Activated T-helper 2 cell treated with anti-CD3 and anti-CD28 coated beads, Interferon-gamma antibody, Interleukin-2, Interleukin-4, amounts not matched to agents 10 μg/mL and 5 μg/mL and 100 μg/mL, durations not matched to agents 14 hours and 24 hours and 36 hours (primary cell): ENCODE measurements at regions of chr9 and their contacts with region 1.

Region 1: DNA sequence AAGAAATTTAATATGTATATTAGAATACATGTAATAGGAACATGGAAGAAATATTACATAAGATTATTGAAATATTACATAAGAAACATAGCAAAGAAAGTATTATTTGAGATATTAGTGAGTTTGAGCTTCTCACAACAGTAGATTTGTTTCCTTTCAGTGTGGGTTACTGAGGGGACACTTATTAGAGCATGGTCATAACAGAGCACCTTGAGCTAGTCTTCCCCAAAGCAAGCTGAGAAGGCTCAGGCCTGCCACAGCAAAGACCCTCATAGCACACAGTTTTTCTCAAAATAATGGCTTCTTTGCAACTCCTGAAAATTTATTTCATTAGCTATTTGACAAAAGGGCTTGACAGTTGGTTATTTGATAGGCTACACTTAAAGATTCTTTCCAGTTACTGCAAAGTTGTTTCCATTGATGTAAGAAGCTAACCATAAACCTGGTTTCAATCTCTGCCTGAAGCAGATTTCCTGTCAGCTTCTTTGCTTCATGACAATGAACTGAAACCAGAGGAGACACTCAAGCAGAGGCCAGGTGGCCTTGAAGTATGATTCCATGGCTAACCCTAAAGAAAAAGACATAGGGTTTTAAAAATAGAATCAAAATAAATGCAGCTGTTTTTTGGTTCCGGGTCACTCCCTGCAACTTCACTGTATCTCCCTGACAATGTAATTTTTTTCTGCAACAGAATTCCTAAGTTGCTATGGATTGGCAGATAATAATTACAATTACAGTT is 68.6 kb downstream of the ERMP1 start:
- DNase-seq: no peak
- H3K4me3 Mint-ChIP-seq: no peak overlapping the region
- H3K27ac Mint-ChIP-seq: peak overlapping the region; percentile 61
- H3K4me1 Mint-ChIP-seq: peaks cover 43% of the 10 kb centered on the region
- H3K27me3 Mint-ChIP-seq: no peaks in the 10 kb centered on the region

Region 2: GRCh38 chr9:5450359-5451091 is 313.8 kb before region 1 on chr9 and contains the start of gene CD274:
- intact Hi-C with region 1: loop called (anchors 10 kb)
- DNase-seq: peak; percentile 77
- H3K4me3 Mint-ChIP-seq: peak within 1 kb of the TSS; percentile 97
- H3K27ac Mint-ChIP-seq: peak within 1 kb of the TSS; percentile 92
- H3K4me1 Mint-ChIP-seq: peaks cover 71% of the 10 kb centered on the region
- H3K27me3 Mint-ChIP-seq: no peaks in the 10 kb centered on the region
- total RNA-seq, gene CD274: 36.7 and 40.5 TPM in 2 replicates

Region 3: DNA sequence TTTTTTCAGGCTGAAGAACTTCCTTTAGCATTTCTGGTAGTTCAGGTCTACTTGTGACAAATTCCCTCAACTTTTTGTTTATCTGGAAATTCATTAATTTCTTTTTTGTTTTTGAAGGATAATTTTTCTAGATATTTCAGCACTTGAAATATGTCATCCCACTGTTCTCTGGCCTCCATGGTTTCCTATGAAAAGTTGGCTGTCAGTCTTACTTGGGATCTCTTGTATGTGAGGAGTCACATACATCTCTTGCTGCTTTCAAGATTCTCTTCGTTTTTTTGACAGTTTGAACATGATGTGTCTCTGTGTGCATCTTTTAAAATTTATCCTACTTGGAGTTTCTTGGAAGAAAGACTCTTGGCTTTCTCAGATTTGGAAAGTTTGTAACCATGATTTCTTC is 55.9 kb before region 1 on chr9:
- intact Hi-C with region 1: no loop called
- DNase-seq: no peak
- H3K4me3 Mint-ChIP-seq: no peak overlapping the region
- H3K27ac Mint-ChIP-seq: no peak overlapping the region
- H3K4me1 Mint-ChIP-seq: no peaks in the 10 kb centered on the region
- H3K27me3 Mint-ChIP-seq: no peaks in the 10 kb centered on the region

Region 4: GRCh38 chr9:5793812-5794211 is 29.5 kb after region 1 on chr9:
- intact Hi-C with region 1: loop called (anchors 1 kb)
- DNase-seq: no peak
- H3K4me3 Mint-ChIP-seq: no peak overlapping the region
- H3K27ac Mint-ChIP-seq: peak overlapping the region; percentile 54
- H3K4me1 Mint-ChIP-seq: peaks cover 63% of the 10 kb centered on the region
- H3K27me3 Mint-ChIP-seq: no peaks in the 10 kb centered on the region